CD8-positive, alpha-beta T cell (primary cell): ENCODE measurements at regions of chr3 and their contacts with region 1.

Region 1: GRCh38 chr3:47836986-47837385 is 34.0 kb downstream of the DHX30 start:
- DNase-seq: no peak
- ATAC-seq: no peak
- H3K4me3 ChIP-seq: no peak overlapping the region
- H3K4me3 Mint-ChIP-seq: no peak overlapping the region
- H3K27ac ChIP-seq: no peak overlapping the region
- H3K27ac Mint-ChIP-seq: no peak overlapping the region
- H3K4me1 ChIP-seq: no peaks in the 10 kb centered on the region
- H3K4me1 Mint-ChIP-seq: peaks cover 2% of the 10 kb centered on the region
- H3K27me3 ChIP-seq: no peaks in the 10 kb centered on the region
- H3K27me3 Mint-ChIP-seq: no peaks in the 10 kb centered on the region
- CTCF ChIP-seq: no peak

Region 2: GRCh38 chr3:48151058-48151806 is 314.2 kb after region 1 on chr3:
- CTCF ChIA-PET with region 1: interaction called, 7 read pairs
- POLR2A ChIA-PET with region 1: no interaction called
- intact Hi-C with region 1: loop called in 1 of 2 experiments (anchors 5 kb)
- DNase-seq: peak; percentile 13 to 69 (median 52)
- ATAC-seq: peak; percentile 85
- H3K4me3 ChIP-seq: no peak overlapping the region
- H3K4me3 Mint-ChIP-seq: no peak overlapping the region
- H3K27ac ChIP-seq: no peak overlapping the region
- H3K27ac Mint-ChIP-seq: no peak overlapping the region
- H3K4me1 ChIP-seq: no peaks in the 10 kb centered on the region
- H3K4me1 Mint-ChIP-seq: no peaks in the 10 kb centered on the region
- H3K27me3 ChIP-seq: no peaks in the 10 kb centered on the region
- H3K27me3 Mint-ChIP-seq: peaks cover 3% of the 10 kb centered on the region
- CTCF ChIP-seq: peak; percentile 45